GM13977 (cell line): ENCODE measurements at regions of chr2 and their contacts with region 1.

Region 1: DNA sequence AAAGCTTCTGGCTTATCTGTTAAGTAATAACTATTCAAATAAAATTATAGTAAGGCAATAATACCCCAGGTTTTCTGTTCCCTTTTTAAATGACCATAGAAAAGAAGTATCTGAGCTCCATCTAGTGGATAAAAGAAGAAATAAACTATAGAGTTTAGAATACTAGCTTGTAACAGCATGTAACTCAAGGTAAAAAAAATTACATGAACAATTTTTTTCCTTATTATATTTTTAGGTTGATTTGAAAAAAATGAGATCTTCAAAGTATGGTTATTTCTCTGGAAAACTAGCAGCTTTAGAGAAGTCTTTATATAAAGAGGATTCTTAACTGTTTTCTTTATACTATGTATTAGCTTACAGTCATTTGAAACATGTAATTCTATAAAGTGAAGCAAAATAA is 58.1 kb downstream of the NCKAP1 start:
- DNase-seq: peak; percentile 34
- CTCF ChIP-seq: peak; percentile 32

Region 2: DNA sequence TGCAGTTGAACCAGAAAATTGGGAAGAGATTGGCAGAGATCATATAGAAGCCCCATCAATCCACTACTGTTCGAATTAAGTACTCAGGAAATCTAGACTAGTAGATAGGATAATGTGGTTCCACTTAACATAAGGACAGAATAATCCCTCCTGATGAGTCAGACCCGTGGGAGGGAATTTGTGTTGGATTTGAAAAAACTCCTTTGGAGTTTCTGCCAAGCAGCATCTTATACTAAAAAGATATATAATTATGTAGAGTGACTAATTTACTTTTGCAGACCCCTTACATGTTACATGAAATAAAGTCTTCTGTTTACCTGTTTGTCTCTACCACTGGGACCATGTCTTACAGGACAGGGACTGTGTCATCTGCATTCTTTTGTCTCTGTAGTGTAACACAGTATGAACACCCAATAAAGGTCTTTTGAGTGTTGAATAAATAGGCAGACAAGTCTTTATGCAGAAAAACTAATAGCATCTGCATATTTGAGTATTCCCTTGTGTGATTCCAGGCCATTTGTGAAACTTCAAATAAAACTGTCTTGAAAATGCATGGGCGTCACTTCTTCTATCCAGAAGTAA is 386.6 kb before region 1 on chr2:
- in situ Hi-C with region 1: no loop called
- DNase-seq: no peak
- CTCF ChIP-seq: no peak

Region 3: DNA sequence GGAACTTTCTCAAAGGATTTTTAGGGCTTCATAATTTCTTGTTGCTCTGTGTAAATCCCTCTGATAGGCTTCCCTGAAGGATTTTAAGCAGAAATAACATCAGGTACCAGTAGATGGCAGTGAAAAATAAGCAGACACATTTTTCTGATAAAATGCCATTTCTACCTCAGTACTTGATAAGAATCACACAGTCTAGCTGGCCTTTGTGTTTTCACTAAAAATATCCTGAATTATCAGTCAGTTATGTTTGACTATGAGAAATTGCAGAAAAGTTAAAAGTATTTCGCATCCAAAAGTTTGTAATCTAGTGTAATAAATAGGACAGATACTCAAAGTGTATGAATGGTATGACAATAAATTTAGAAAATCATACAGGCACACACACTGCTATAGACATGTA is 195.3 kb before region 1 on chr2:
- in situ Hi-C with region 1: loop called (anchors 10 kb)
- DNase-seq: no peak
- CTCF ChIP-seq: peak; percentile 45